HCT116 (cell line): ENCODE measurements at regions of chr1 and their contacts with region 1.

Region 1: DNA sequence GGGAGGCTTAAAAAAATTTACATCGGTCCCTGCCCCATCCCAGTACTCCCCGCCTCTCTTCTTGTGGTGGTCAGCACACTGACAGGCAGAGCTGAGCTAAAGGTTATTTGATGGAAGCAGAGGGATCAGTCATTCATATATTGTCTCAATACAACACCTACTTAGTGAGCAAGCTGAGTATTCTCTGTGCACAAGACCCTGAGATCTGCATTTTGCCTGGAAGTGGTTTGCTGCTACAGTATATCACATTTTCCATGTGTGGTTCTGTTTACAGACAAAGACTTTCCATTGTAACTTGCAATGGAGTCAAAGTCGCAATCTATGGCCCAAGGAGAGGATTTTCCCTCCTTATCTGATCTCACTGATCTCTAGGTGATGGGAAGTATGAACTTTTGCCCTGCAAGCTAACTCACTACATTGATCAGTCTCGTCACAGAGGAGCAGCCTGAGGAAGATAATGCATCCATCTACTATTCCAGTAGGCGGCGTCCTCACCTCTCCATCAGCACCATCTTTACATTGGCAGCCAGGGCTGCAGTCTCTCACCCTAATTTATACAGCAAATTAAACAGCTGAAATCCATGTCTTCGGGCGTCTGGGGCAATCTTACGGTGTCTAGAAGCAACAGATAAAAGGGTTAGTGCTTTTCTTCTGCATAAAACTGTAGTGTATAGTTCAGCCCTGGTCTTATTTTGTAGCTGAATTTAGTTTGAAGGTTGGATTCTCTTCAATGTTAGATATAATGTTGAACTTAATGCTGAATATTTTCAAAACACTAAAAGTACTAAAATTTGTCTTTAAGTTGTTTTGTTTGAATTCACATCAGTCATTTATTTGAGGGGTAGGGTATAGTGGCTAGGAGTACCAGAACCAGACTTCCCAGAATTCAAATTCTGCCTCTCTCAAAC is 3.2 kb upstream of the TRAF5 start:
- DNase-seq: no peak
- ATAC-seq: peak; percentile 81
- H3K4me3 ChIP-seq: no peak overlapping the region
- H3K27ac ChIP-seq: no peak overlapping the region
- H3K4me1 ChIP-seq: peaks cover 0 to 26% of the 10 kb centered on the region in 2 experiments; a peak in 3 of 4 replicates
- H3K27me3 ChIP-seq: no peaks in the 10 kb centered on the region
- CTCF ChIP-seq: peak; percentile 80 to 82 (median 82)
- POLR2A ChIP-seq: no peak
- RAD21 ChIP-seq: peak; percentile 90

Region 2: DNA sequence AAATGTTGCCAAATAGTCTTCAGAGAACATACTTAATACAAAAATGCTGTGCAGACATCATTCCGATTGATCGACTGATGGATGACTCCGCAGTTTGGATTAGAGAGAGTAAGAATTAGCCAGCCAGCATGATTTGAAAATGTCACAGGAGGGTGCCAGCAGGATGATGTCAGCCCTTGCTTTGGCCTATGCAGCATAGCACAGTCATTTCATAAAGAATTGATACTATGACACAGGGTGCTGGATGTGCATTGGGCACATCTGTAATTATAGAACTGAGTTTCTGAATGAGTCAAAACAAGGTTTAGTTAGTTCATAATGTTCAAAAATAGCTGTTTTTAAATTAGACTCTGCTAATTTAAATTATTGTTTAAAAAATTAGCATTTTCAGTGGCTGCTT is 18.4 kb before region 1 on chr1:
- CTCF ChIA-PET with region 1: no interaction called
- POLR2A ChIA-PET with region 1: no interaction called
- RAD21 ChIA-PET with region 1: no interaction called
- intact Hi-C with region 1: no loop called
- DNase-seq: no peak
- ATAC-seq: no peak
- H3K4me3 ChIP-seq: no peak overlapping the region
- H3K27ac ChIP-seq: no peak overlapping the region
- H3K4me1 ChIP-seq: no peaks in the 10 kb centered on the region
- H3K27me3 ChIP-seq: no peaks in the 10 kb centered on the region
- CTCF ChIP-seq: no peak
- POLR2A ChIP-seq: no peak
- RAD21 ChIP-seq: no peak

Region 3: GRCh38 chr1:211382714-211383480 is 59.5 kb after region 1 on chr1:
- CTCF ChIA-PET with region 1: interaction called, 4 read pairs
- POLR2A ChIA-PET with region 1: interaction called, 8 read pairs
- RAD21 ChIA-PET with region 1: no interaction called
- intact Hi-C with region 1: loop called (anchors 5 kb)
- DNase-seq: peak; percentile 90
- ATAC-seq: peak; percentile 98
- H3K4me3 ChIP-seq: peak overlapping the region; percentile 81 to 89
- H3K27ac ChIP-seq: peak overlapping the region; percentile 83
- H3K4me1 ChIP-seq: peaks cover 2 to 22% of the 10 kb centered on the region in 2 experiments; a peak in 2 of 4 replicates
- H3K27me3 ChIP-seq: no peaks in the 10 kb centered on the region
- CTCF ChIP-seq: no peak
- POLR2A ChIP-seq: peak; percentile 95
- RAD21 ChIP-seq: no peak

Region 4: DNA sequence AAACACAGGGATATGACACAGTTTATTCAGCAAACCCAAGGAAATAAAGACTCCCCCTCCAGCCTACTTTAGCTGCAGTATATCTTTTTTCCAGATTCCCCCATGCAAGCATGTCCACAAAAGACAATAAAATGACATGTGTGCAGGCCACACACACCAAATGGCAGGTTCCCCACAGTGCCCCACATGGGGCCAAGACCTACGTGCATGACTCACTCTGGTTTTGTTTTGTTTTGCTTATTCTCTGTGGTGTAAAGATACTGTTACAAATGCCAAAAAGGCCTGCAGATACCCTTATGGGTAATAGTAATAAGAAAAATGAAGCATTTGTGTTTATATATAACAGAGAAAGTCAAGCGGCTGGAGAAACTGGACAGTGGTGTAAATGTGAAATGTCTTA is 97.0 kb after region 1 on chr1:
- CTCF ChIA-PET with region 1: no interaction called
- POLR2A ChIA-PET with region 1: no interaction called
- RAD21 ChIA-PET with region 1: no interaction called
- intact Hi-C with region 1: no loop called
- DNase-seq: no peak
- ATAC-seq: peak; percentile 66; the same call in 1 of the 2 replicates
- H3K4me3 ChIP-seq: no peak overlapping the region
- H3K27ac ChIP-seq: no peak overlapping the region
- H3K4me1 ChIP-seq: peaks cover 7 to 8% of the 10 kb centered on the region in 2 experiments; a peak in 2 of 4 replicates
- H3K27me3 ChIP-seq: no peaks in the 10 kb centered on the region
- CTCF ChIP-seq: no peak
- POLR2A ChIP-seq: no peak
- RAD21 ChIP-seq: no peak

Region 5: DNA sequence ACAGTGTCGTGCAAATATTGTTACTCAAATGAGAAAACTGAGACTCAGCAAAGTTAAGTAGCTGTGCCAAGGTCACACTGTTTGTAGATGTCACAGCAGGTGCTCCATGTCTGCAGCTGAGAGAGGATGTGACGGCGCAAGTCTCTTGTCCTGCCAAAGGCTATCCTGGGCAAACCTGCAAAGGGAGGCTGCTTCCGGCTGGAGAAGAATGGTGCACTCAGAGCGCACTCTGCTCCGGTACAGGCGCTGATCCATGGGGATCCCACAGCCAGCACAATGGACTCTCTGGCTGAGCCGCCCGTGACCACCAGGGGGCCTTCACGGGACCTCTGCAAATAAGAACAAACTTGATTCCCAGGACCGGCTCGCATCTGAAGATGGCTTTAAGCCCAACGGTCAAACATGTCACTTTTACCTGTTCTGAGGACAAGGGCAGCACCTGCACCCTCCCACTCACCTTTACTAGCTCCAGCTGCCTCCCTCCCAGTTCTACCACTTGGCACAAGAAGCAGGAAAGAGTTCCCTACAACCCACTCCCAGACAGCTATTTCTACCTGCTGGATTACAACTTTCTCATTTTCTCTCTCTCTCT is 146.6 kb after region 1 on chr1:
- CTCF ChIA-PET with region 1: interaction called, 5 read pairs
- POLR2A ChIA-PET with region 1: no interaction called
- RAD21 ChIA-PET with region 1: no interaction called
- intact Hi-C with region 1: loop called (anchors 1 kb)
- DNase-seq: peak; percentile 72
- ATAC-seq: peak; percentile 100
- H3K4me3 ChIP-seq: no peak overlapping the region
- H3K27ac ChIP-seq: no peak overlapping the region
- H3K4me1 ChIP-seq: peaks cover 3 to 11% of the 10 kb centered on the region in 2 experiments; a peak in 3 of 4 replicates
- H3K27me3 ChIP-seq: no peaks in the 10 kb centered on the region
- CTCF ChIP-seq: peak; percentile 83 to 90 (median 87)
- POLR2A ChIP-seq: no peak
- RAD21 ChIP-seq: peak; percentile 72

Region 6: GRCh38 chr1:211578640-211579433 is 255.4 kb after region 1 on chr1 and contains the start of gene SLC30A1:
- CTCF ChIA-PET with region 1: no interaction called
- POLR2A ChIA-PET with region 1: no interaction called
- RAD21 ChIA-PET with region 1: no interaction called
- intact Hi-C with region 1: no loop called
- DNase-seq: peak; percentile 94
- ATAC-seq: peak; percentile 87
- H3K4me3 ChIP-seq: peak within 1 kb of the TSS; percentile 74 to 84
- H3K27ac ChIP-seq: peak within 1 kb of the TSS; percentile 84
- H3K4me1 ChIP-seq: peaks cover 10 to 40% of the 10 kb centered on the region in 2 experiments
- H3K27me3 ChIP-seq: no peaks in the 10 kb centered on the region
- CTCF ChIP-seq: no peak
- POLR2A ChIP-seq: peak; percentile 30
- RAD21 ChIP-seq: no peak
- total RNA-seq, gene SLC30A1: 9.7 TPM